Common myeloid progenitor, CD34-positive (primary cell): ENCODE measurements at regions of chr19 and their contacts with region 1.

Region 1: DNA sequence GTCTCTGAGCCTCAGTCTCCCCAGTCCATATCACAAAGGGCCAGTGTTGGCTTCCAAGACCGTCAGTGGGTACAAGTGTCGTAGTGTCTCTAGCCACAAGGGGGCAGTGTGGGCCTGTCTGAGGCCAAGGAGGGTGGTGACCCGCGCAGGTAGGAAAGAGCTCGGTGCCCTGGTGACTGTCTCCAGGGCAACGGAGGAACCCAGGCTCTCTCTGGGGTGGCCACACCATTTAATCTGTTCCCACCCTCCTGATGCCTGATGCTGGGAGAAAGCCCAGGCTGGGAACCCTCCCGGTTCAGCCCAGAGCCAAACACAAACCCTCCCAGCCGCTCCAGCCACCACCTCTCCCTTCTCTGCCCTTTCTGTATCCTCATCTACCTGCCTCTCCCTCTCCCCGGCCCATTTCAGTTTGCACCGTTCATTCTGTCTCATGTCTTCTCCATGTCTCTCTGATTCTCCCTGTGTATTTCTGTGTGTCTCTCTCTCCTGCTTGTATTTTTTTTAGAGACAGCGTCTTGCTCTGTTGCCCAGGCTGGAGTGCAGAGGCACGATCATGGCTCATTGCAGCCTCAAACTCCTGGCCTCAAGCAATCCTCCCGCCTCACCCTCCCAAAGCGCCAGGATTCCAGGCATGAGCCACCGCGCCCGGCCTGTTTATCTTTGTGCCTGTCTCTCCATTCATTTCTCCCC is 17.5 kb upstream of the MEIS3 start:
- DNase-seq: peak; percentile 66 to 80 (median 73)
- H3K4me3 ChIP-seq: no peak overlapping the region
- H3K27ac ChIP-seq: no peak overlapping the region
- H3K4me1 ChIP-seq: peaks cover 0 to 9% (median 4%) of the 10 kb centered on the region in 4 experiments
- H3K27me3 ChIP-seq: peaks cover 0 to 40% (median 4%) of the 10 kb centered on the region in 5 experiments

Region 2: DNA sequence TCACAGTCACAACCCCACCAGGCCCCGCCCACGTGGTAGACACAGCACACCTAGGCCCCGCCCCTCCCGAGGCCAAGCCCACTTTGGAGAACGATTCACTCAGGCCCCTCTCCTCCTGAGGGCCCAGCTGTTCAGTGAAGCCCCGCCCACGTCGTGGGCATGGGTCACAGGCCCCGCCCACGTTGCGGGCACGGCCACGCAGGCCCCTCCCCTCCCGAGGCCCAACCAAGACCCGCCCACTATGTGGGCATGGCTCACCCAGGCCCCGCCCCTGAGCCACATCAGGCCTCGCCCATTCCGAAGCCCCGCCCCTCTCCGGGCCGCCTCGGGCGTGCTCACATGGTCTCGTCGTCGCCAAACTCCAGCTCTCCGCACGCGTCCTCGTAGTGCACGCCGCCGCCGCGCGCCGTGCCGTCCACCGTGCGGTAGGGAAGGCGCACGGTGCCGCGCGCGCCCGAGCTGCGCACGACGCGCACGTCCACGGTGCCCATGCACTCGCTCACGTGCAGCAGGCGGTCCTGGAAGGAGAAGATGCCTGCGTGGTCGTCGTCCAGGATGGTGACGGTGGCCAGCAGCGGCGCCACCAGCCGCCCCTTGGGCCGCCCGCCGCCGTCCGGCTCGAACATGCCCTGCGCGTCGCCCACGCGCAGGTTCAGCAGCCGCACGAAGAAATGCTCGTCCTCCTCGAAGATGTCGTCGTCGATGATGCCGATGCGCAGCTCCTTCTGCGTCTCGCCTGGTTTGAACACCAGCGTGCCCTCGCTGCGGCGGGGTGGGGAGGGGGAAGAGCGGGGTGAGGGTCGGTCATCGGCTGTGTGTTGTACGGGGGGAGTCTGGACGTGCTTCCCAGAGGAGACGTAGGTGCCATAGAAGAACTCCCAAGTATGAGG is 10.9 kb after region 1 on chr19:
- CTCF ChIA-PET with region 1: interaction called, 13 read pairs
- POLR2A ChIA-PET with region 1: interaction called, 4 read pairs
- DNase-seq: peak; percentile 61 to 81 (median 79)
- H3K4me3 ChIP-seq: peak overlapping the region in 2 of 7 experiments; percentile 21 to 28
- H3K27ac ChIP-seq: no peak overlapping the region
- H3K4me1 ChIP-seq: peaks cover 2 to 32% (median 31%) of the 10 kb centered on the region in 4 experiments
- H3K27me3 ChIP-seq: peaks cover 3 to 85% (median 29%) of the 10 kb centered on the region in 5 experiments

Region 3: GRCh38 chr19:47483800-47484690 is 47.2 kb after region 1 on chr19 and contains the start of gene KPTN:
- CTCF ChIA-PET with region 1: interaction called, 10 read pairs
- POLR2A ChIA-PET with region 1: no interaction called
- DNase-seq: peak; percentile 95 to 96 (median 96)
- H3K4me3 ChIP-seq: peak within 1 kb of the TSS; percentile 71 to 95 (median 82)
- H3K27ac ChIP-seq: peak within 1 kb of the TSS; percentile 72 to 91
- H3K4me1 ChIP-seq: peaks cover 11 to 52% (median 51%) of the 10 kb centered on the region in 4 experiments
- H3K27me3 ChIP-seq: no peaks in the 10 kb centered on the region

Region 4: DNA sequence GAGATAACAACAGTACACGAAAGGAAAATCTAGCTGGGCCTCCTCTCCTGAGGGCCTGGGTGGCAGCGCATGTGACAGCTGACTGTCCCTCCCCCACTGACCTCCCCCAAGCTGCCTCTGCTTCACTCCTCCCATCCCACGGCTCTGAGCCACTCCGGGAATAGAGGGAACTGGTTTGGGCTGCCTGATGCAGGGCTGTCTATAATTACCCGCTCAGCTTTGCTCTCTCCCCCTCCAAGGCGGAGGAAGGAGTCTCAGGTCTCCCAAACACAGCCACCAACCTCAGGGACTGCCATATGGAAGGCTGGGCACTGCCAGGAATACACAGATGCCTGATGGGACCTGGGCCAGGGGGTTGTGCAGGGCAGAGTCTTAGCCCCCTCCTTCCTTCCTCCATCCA is 70.2 kb after region 1 on chr19:
- CTCF ChIA-PET with region 1: interaction called, 13 read pairs
- POLR2A ChIA-PET with region 1: no interaction called
- DNase-seq: no peak
- H3K4me3 ChIP-seq: peak overlapping the region in 2 of 7 experiments; percentile 23 to 32
- H3K27ac ChIP-seq: peak overlapping the region; percentile 2 to 50
- H3K4me1 ChIP-seq: peaks cover 0 to 39% (median 30%) of the 10 kb centered on the region in 4 experiments
- H3K27me3 ChIP-seq: no peaks in the 10 kb centered on the region

Region 5: GRCh38 chr19:47514869-47515588 is 78.2 kb after region 1 on chr19 and contains the start of gene NAPA:
- CTCF ChIA-PET with region 1: interaction called, 19 read pairs
- POLR2A ChIA-PET with region 1: no interaction called
- DNase-seq: peak; percentile 100
- H3K4me3 ChIP-seq: peak within 1 kb of the TSS; percentile 72 to 99 (median 97)
- H3K27ac ChIP-seq: peak within 1 kb of the TSS; percentile 97 to 99
- H3K4me1 ChIP-seq: peaks cover 13 to 68% (median 53%) of the 10 kb centered on the region in 4 experiments
- H3K27me3 ChIP-seq: no peaks in the 10 kb centered on the region

Region 6: DNA sequence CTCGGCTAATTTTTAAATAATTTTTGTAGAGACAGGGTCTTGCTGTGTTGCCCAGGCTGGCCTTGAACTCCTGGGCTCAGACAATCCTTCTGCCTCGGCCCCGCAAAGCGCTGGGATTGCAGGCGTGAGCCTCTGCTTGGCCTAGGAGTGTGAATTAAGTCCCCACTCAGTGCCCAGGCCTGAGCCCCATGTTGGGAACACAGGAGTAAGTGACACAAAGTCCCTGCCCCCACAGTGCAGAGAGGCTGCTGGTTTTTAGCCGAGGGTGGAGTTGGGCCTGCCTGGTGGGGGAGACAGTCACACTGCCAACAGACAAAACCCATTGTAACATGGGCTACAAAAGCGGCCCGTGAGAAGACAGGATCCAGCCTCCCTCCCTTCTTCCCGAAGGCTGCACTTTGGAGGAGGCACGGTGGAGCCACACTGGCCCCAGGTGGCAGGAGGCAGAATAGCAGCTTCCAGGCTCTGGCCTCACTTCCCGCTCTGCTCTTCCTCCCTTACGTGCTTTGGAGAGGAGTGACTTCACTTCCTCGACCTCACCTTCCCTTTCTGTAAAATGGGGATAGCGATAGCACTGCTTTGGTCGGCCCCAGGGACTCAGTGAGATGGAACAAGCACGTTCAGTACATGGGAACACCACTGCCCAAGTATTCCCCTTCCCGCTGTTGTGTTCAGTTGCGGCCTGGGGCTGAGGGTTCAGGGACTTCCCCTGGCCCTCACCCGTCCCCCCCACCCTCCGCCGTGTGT is 261.2 kb after region 1 on chr19:
- CTCF ChIA-PET with region 1: interaction called, 64 read pairs
- POLR2A ChIA-PET with region 1: no interaction called
- DNase-seq: peak; percentile 67 to 82 (median 77)
- H3K4me3 ChIP-seq: no peak overlapping the region
- H3K27ac ChIP-seq: no peak overlapping the region
- H3K4me1 ChIP-seq: peaks cover 0 to 7% (median 2%) of the 10 kb centered on the region in 4 experiments
- H3K27me3 ChIP-seq: no peaks in the 10 kb centered on the region

Region 7: DNA sequence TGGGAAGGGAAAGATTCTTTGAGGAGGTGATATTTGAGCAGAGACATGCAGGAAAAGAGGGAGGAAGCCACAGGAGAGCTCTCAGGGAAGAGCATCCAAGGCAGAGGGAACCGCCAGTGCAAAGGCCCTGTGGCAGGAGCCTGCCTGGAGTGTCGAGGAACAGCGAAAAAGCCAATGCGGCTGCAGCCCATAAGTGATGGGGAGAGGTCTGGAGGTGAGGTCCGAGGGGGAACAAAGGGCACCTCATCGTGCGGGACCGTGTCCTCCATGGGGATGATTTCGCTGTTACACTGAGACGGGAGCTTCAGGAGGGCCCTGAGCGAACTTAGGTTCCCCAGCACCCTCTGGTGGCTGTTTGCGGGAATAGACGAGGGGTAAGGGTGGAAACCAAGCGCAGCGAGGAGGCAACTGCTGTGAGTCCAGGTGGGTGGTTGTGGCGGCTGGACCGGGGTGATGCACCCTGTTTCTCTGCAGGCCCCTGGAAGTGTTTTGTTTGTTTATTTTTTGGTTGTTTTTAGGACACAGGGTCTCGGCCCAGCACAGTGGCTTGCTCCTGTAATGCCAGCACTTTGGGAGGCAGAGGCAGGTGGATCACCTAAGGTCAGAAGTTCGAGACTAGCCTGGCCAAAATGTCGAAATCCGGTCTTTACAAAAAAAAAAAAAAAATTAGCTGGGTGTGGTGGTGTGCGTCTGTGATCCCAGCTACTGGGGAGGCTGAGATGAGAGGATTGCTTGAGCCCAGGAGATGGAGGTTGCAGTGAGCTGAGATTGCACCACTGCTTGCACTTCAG is 270.5 kb after region 1 on chr19:
- CTCF ChIA-PET with region 1: interaction called, 14 read pairs
- POLR2A ChIA-PET with region 1: no interaction called
- DNase-seq: peak; percentile 71 to 91 (median 83)
- H3K4me3 ChIP-seq: no peak overlapping the region
- H3K27ac ChIP-seq: no peak overlapping the region
- H3K4me1 ChIP-seq: peaks cover 0 to 5% (median 2%) of the 10 kb centered on the region in 4 experiments
- H3K27me3 ChIP-seq: no peaks in the 10 kb centered on the region